ENCODE measurements at regions of chr9 and their contacts with region 1.

Region 1: GRCh38 chr9:99162759-99163364 is 57.9 kb downstream of the TGFBR1 start:
- DNase-seq: peak in 2 of 4 experiments; percentile 37 to 56
- ATAC-seq: peak; percentile 54
- H3K4me3 ChIP-seq: no peak overlapping the region
- H3K27ac ChIP-seq: no peak overlapping the region
- H3K4me1 ChIP-seq: peaks cover 0 to 2% of the 10 kb centered on the region in 2 experiments; a peak in 1 of 5 replicates
- H3K27me3 ChIP-seq: no peaks in the 10 kb centered on the region
- CTCF ChIP-seq: peak; percentile 43 to 85 (median 62); a peak in 5 of 6 replicates
- EP300 ChIP-seq: no peak
- POLR2A ChIP-seq: no peak
- RAD21 ChIP-seq: peak; percentile 71 to 77

Region 2: GRCh38 chr9:98870782-98871557 is 291.9 kb before region 1 on chr9:
- CTCF ChIA-PET with region 1: no interaction called
- POLR2A ChIA-PET with region 1: no interaction called
- in situ Hi-C with region 1: no loop called
- intact Hi-C with region 1: no loop called
- DNase-seq: peak in 3 of 4 experiments; percentile 53 to 70 (median 57)
- ATAC-seq: peak; percentile 33
- H3K4me3 ChIP-seq: no peak overlapping the region
- H3K27ac ChIP-seq: no peak overlapping the region
- H3K4me1 ChIP-seq: peaks cover 0 to 33% of the 10 kb centered on the region in 2 experiments; a peak in 3 of 5 replicates
- H3K27me3 ChIP-seq: no peaks in the 10 kb centered on the region
- CTCF ChIP-seq: no peak
- EP300 ChIP-seq: no peak
- POLR2A ChIP-seq: no peak
- RAD21 ChIP-seq: no peak

Region 3: DNA sequence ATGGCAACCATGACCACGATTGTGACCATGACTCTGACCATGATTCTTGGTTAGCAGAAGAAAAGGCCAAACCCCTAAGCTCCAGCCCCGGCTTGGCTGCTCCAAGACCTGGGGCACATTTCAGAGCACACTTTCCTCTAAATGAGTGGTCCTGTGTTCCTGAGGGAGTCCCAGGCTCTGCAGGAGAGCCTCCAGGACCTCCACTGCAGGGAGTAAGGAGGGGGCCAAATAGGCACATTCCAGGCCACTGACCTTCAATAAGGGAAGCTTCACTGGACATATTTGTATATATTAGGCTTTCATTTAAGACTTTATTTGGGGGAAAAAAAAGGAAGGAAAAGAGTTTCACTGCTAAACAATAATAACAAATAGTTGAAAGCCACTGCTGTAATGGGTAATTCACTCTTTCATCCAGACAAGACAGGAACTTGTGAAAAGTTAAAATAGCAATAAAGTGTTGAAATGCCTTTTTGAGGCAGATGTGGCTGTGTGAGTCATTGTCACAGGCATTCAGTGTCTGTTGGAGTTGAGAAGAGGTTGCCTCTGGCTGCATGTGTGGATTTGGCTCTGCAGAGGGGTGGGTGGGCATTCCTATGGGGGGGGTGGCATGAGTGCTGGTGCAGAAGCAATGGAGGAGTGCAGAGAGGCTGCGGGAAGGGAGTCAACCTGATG is 121.8 kb before region 1 on chr9:
- CTCF ChIA-PET with region 1: no interaction called
- POLR2A ChIA-PET with region 1: no interaction called
- in situ Hi-C with region 1: no loop called
- intact Hi-C with region 1: no loop called
- DNase-seq: no peak
- ATAC-seq: no peak
- H3K4me3 ChIP-seq: no peak overlapping the region
- H3K27ac ChIP-seq: no peak overlapping the region
- H3K4me1 ChIP-seq: peaks cover 0 to 3% of the 10 kb centered on the region in 2 experiments; a peak in 2 of 5 replicates
- H3K27me3 ChIP-seq: no peaks in the 10 kb centered on the region
- CTCF ChIP-seq: no peak
- EP300 ChIP-seq: no peak
- POLR2A ChIP-seq: no peak
- RAD21 ChIP-seq: no peak

Region 4: DNA sequence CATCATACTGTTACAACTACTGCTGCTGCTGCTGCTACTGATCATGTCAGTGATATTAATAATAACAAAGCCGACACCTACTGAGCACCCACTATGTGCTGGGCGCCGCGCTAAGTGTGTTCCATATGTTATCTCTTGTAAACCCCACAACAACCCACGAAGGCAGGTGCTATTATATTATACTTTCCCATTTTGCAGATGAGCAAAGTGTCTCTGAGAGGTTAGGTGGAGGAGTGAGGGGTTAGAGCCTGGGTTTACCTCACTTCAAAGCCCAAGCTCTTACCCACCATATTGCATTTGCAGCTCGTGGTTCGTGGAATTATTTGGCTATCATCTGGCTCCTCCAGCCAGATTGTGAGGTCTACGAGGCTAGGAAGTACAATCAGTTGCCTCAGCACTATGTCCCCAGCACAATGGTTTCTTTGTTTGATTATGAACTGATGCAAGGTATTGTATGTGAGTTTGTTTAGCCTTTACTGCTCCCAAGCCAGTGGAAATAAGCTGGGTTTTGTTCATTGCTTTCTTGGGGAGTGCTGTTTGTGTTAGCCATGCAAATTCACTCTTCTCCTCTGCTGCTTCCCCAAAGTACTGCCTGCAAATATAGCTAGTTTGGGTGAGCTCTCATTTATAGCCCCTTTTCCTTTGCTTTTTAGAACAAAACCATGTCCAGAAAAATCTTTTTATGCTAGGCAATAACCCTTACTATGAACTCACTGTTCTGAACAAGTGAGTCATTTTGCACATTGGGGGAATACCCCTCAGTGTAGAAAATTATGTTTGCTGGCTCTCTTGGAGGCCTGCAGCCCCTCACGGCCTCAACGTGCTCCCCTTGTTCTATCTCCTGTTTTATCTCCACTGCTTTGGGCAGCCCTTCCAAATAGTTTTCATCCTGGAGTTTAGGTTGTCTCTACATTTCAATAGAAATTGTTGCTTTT is 11.0 kb after region 1 on chr9:
- CTCF ChIA-PET with region 1: no interaction called
- POLR2A ChIA-PET with region 1: interaction called, 10 read pairs
- in situ Hi-C with region 1: no loop called
- intact Hi-C with region 1: no loop called
- DNase-seq: no peak
- ATAC-seq: no peak
- H3K4me3 ChIP-seq: no peak overlapping the region
- H3K27ac ChIP-seq: no peak overlapping the region
- H3K4me1 ChIP-seq: no peaks in the 10 kb centered on the region; a peak in 1 of 5 replicates
- H3K27me3 ChIP-seq: peaks cover 0 to 22% of the 10 kb centered on the region in 2 experiments
- CTCF ChIP-seq: no peak
- EP300 ChIP-seq: no peak
- POLR2A ChIP-seq: no peak
- RAD21 ChIP-seq: no peak

Region 5: DNA sequence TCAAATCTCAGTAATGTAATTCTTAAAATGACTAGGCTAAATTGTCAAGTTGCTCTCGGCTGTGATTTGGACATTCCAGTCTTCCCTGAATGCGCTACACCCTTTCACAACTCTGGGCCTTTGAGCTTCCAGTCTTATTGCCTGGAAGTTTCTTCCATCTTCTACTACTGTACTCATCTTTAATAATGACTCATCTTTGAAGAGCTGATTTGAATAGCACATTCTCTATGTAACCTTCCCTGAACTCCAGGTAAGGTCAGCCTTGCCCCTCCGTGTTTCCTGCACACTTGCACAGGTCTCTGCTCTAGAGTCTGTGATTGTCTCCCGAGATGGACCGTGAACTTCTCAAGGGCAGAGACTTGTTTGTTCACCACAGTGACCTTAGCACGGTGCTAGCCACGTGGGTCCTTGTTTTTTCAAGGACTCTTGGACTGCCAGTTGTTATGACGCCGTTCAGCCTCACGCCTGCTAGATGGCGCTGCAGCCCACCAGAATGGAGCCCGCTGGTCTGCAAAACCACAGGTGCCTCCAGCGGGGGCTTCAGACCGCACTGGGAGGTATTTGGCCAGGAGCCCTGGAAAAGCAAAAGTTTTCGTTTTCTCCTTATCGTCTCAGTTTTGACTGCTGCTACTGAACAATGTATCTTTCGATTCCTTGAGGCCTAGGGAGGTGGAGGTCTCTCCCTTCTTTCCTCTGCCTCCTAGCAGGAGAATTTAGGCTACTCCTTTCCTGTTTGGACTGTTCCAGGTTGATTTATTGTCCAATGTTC is 103.6 kb after region 1 on chr9:
- CTCF ChIA-PET with region 1: no interaction called
- POLR2A ChIA-PET with region 1: interaction called, 3 read pairs
- in situ Hi-C with region 1: no loop called
- intact Hi-C with region 1: loop called (anchors 5 kb)
- DNase-seq: peak; percentile 61 to 84 (median 73)
- ATAC-seq: peak; percentile 95
- H3K4me3 ChIP-seq: no peak overlapping the region
- H3K27ac ChIP-seq: no peak overlapping the region
- H3K4me1 ChIP-seq: peaks cover 3 to 4% of the 10 kb centered on the region in 2 experiments; a peak in 3 of 5 replicates
- H3K27me3 ChIP-seq: peaks cover 4 to 10% of the 10 kb centered on the region in 2 experiments; a peak in 3 of 5 replicates
- CTCF ChIP-seq: peak; percentile 92 to 96 (median 93)
- EP300 ChIP-seq: no peak
- POLR2A ChIP-seq: no peak
- RAD21 ChIP-seq: peak; percentile 89 to 90

Region 6: GRCh38 chr9:99807276-99807852 is 644.5 kb after region 1 on chr9:
- CTCF ChIA-PET with region 1: no interaction called
- POLR2A ChIA-PET with region 1: no interaction called
- in situ Hi-C with region 1: no loop called
- intact Hi-C with region 1: loop called (anchors 10 kb)
- DNase-seq: peak; percentile 67 to 79 (median 72)
- ATAC-seq: peak; percentile 92
- H3K4me3 ChIP-seq: no peak overlapping the region
- H3K27ac ChIP-seq: no peak overlapping the region
- H3K4me1 ChIP-seq: peaks cover 0 to 9% of the 10 kb centered on the region in 2 experiments; a peak in 2 of 5 replicates
- H3K27me3 ChIP-seq: no peaks in the 10 kb centered on the region
- CTCF ChIP-seq: peak; percentile 69 to 85 (median 78)
- EP300 ChIP-seq: no peak
- POLR2A ChIP-seq: no peak
- RAD21 ChIP-seq: peak; percentile 68 to 78

Region 7: GRCh38 chr9:100216178-100216787 is 1053.4 kb after region 1 on chr9:
- CTCF ChIA-PET with region 1: no interaction called
- POLR2A ChIA-PET with region 1: no interaction called
- in situ Hi-C with region 1: no loop called
- intact Hi-C with region 1: loop called (anchors 10 kb)
- DNase-seq: peak; percentile 66 to 84 (median 74)
- ATAC-seq: peak; percentile 99
- H3K4me3 ChIP-seq: no peak overlapping the region
- H3K27ac ChIP-seq: no peak overlapping the region
- H3K4me1 ChIP-seq: peaks cover 0 to 12% of the 10 kb centered on the region in 2 experiments; a peak in 2 of 5 replicates
- H3K27me3 ChIP-seq: no peaks in the 10 kb centered on the region
- CTCF ChIP-seq: peak; percentile 84 to 88 (median 87)
- EP300 ChIP-seq: no peak
- POLR2A ChIP-seq: no peak
- RAD21 ChIP-seq: peak; percentile 83 to 92

Region 8: DNA sequence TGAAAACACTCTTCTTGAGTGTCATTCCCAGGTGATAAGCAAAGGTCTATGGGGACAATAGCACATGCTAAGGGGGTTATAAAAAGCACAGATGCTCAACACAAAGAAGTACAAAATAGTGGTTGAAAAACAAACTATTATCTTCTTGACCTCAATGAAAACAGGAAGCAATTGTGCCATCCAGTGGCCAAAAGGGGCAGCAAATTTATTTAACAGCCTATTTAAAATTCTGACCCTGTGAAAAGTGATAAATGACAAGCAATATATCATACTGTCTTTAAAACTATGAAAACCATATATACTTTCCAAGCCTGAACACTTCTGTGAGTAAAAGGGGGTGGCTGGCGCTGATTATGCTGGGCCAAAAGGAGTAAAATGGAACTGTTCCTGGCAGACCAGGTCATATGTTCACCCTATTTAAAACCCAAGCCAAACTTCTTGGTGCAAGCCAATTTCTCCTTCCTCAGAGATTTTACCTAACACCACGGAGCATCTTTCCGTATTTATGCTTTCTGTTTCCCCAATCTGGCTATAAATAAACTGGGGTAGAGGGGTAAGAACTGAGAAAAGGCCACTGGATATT is 1160.2 kb after region 1 on chr9:
- CTCF ChIA-PET with region 1: interaction called, 4 read pairs
- POLR2A ChIA-PET with region 1: no interaction called
- in situ Hi-C with region 1: no loop called
- intact Hi-C with region 1: loop called (anchors 10 kb)
- DNase-seq: peak; percentile 19 to 57 (median 25)
- ATAC-seq: peak; percentile 72
- H3K4me3 ChIP-seq: no peak overlapping the region
- H3K27ac ChIP-seq: no peak overlapping the region
- H3K4me1 ChIP-seq: no peaks in the 10 kb centered on the region
- H3K27me3 ChIP-seq: no peaks in the 10 kb centered on the region
- CTCF ChIP-seq: peak; percentile 47 to 76 (median 67); a peak in 5 of 6 replicates
- EP300 ChIP-seq: no peak
- POLR2A ChIP-seq: no peak
- RAD21 ChIP-seq: peak; percentile 25 to 61